ENCODE measurements at regions of chr9 and their contacts with region 1.

Region 1: DNA sequence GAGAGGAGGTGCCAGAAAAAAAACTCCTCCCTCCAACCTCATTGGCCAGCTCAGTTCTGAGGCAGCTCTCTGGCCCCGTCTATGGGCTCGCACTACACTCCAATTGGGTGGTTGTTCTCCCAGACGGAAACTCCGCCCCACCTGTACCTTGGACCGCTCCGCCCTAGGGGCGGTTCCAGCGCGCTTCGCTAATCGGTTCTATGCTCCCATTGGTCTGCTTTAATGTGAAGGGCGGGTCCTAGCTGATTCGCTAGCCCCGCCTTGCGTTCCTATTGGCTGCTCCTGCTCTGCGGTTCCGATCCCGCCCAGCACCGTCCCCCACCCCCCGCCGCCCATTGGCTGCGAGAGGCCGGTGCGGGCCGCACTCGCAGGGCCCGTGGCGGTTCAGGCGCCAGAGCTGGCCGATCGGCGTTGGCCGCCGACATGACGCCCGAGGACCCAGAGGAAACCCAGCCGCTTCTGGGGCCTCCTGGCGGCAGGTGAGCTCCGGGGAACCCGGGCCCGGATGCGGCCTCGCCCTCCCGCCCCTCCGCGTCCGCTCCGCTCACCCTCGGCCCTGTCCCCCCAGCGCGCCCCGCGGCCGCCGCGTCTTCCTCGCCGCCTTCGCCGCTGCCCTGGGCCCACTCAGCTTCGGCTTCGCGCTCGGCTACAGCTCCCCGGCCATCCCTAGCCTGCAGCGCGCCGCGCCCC is at the start of gene SLC2A8:
- DNase-seq: peak; percentile 97
- H3K4me3 Mint-ChIP-seq: peak within 1 kb of the TSS; percentile 77
- H3K27ac Mint-ChIP-seq: peak within 1 kb of the TSS; percentile 53
- H3K4me1 Mint-ChIP-seq: peaks cover 10% of the 10 kb centered on the region
- H3K27me3 Mint-ChIP-seq: peaks cover 67% of the 10 kb centered on the region
- total RNA-seq, gene SLC2A8: 3.9 and 5.8 TPM in 2 replicates

Region 2: DNA sequence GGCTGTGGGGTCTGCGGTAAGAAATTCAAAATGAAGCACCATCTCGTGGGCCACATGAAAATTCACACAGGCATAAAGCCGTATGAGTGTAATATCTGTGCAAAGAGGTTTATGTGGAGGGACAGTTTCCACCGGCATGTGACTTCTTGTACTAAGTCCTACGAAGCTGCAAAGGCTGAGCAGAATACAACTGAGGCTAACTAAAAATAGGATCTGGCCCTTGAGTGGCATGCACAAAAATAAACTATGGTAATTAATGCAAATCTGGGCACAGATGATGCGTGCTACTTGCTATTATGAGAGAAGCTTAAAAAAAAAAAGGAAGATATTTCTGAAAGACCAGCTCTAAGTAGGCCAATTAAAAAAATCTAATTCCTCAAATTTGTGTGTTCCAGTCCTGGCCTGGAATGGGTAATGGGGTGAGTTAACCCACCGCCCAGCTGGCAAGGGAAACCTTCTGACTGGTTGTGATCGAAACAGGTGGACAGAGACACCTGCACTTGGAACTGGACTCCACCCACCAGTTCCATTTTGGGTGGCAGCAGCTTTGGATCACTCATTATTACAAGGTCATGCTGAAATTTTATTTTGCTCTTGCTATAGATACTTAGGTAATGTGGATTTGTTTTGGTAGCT is 563.1 kb before region 1 on chr9:
- intact Hi-C with region 1: no loop called
- DNase-seq: no peak
- H3K4me3 Mint-ChIP-seq: no peak overlapping the region
- H3K27ac Mint-ChIP-seq: no peak overlapping the region
- H3K4me1 Mint-ChIP-seq: peaks cover 30% of the 10 kb centered on the region
- H3K27me3 Mint-ChIP-seq: no peaks in the 10 kb centered on the region

Region 3: GRCh38 chr9:126844085-126844484 is 552.9 kb before region 1 on chr9:
- intact Hi-C with region 1: no loop called
- DNase-seq: no peak
- H3K4me3 Mint-ChIP-seq: no peak overlapping the region
- H3K27ac Mint-ChIP-seq: no peak overlapping the region
- H3K4me1 Mint-ChIP-seq: peaks cover 3% of the 10 kb centered on the region
- H3K27me3 Mint-ChIP-seq: peaks cover 2% of the 10 kb centered on the region

Region 4: GRCh38 chr9:127224178-127224882 is 172.6 kb before region 1 on chr9:
- intact Hi-C with region 1: loop called (anchors 1 kb)
- DNase-seq: peak; percentile 95
- H3K4me3 Mint-ChIP-seq: peak overlapping the region; percentile 84
- H3K27ac Mint-ChIP-seq: peak overlapping the region; percentile 82
- H3K4me1 Mint-ChIP-seq: peaks cover 19% of the 10 kb centered on the region
- H3K27me3 Mint-ChIP-seq: peaks cover 54% of the 10 kb centered on the region

Region 5: DNA sequence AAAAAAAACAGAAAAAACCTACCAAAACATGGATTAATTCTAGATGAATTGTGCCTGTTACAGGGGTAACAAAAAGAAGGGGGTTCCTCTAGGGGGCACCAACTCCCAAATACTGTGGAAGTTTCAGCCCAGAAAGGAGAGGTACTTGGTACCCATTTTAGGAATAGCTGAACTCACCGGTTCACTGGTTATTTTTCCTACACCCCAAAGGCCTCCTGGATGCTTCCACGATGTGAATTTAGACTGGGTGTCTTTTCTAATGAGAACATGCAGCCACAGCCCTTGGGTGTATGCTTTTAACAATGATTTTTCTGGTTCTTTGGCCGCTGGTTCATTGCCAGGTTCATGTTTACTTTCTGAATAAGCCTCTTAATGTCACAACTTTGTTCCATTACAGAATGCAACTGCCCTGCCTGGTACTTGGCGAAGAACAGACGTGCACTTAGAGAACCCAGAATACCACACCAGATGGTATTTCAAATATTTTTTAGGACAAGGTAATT is 85.7 kb before region 1 on chr9:
- intact Hi-C with region 1: loop called (anchors 5 kb)
- DNase-seq: peak; percentile 80
- H3K4me3 Mint-ChIP-seq: no peak overlapping the region
- H3K27ac Mint-ChIP-seq: no peak overlapping the region
- H3K4me1 Mint-ChIP-seq: no peaks in the 10 kb centered on the region
- H3K27me3 Mint-ChIP-seq: peaks cover 36% of the 10 kb centered on the region

Region 6: DNA sequence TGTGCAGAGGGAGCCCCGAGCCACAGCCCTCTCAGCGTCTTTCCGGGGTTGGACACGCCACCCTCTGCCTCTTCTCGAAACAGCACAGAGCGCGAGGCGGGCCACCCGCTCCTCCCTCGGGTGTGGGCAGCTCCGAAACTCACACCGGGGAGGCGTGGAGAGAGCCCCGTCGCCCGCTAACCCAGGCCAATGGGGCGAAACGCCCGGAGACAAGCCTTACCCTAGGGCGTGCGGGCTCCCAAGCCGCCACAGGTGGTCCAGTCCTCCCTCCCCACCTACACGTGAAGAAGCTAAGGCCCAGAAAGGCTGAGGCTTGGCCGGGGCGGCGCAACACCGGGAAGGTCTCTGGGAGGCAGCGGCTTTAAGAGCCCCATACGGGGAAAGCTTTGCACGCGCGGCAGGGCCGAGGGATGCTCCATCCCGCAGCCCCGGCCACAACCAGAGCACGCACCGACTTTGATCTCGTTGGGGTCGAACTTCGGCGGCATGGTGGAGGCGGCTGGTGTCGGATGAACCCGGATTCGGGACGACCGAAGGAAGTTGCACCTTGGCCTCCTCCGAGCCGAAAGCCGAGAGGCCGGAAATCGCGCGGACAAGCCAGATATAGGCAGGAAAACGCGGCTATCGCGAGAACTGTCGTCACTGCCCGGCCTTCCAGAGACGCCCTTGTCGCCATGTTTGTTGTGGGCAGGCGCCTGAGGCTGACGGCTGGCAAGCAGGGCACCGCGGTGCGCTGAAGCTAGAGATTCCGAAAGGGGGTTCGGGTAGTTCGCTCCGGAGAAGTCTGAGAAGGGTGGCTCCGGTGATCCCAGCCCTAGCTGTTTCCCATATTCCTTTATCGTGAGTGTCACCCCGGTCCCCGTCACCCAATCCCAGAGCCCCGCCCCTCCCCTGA is 54.1 kb after region 1 on chr9 and contains the starts of genes LRSAM1 and RPL12:
- intact Hi-C with region 1: loop called (anchors 2 kb)
- DNase-seq: peak; percentile 99
- H3K4me3 Mint-ChIP-seq: peak within 1 kb of the TSS; percentile 98
- H3K27ac Mint-ChIP-seq: peak within 1 kb of the TSS; percentile 98
- H3K4me1 Mint-ChIP-seq: peaks cover 46% of the 10 kb centered on the region
- H3K27me3 Mint-ChIP-seq: no peaks in the 10 kb centered on the region
- total RNA-seq, gene LRSAM1: 24.6 and 26.4 TPM in 2 replicates
- total RNA-seq, gene RPL12: 1,245 and 1,252 TPM in 2 replicates

Region 7: DNA sequence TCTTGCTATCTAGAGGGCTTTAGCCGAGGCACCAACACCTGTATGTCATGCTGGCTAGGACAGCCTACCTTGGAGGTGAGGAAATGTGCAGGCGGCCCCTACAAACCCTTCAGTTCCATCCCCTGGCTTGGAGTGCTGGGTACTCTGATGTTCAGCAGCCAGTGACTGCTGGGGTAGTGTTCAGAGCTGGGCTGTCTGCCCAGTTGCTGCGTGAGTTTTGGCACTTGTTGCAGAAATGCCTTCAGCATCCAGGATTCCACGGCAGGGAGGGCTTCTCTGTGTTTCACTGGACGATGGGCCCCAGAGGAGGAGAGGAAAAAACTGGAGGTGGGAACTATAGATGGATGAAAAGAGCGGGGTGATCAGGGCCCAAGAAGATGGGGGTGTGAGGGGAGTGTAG is 889.5 kb after region 1 on chr9:
- intact Hi-C with region 1: no loop called
- DNase-seq: no peak
- H3K4me3 Mint-ChIP-seq: no peak overlapping the region
- H3K27ac Mint-ChIP-seq: no peak overlapping the region
- H3K4me1 Mint-ChIP-seq: no peaks in the 10 kb centered on the region
- H3K27me3 Mint-ChIP-seq: no peaks in the 10 kb centered on the region